Activated CD4-positive, alpha-beta memory T cell treated with anti-CD3 and anti-CD28 coated beads for 36 hours (primary cell): ENCODE measurements at regions of chr3 and their contacts with region 1.

Region 1: GRCh38 chr3:126911162-126912026 is 71.5 kb upstream of the PLXNA1 start:
- DNase-seq: peak; percentile 87
- H3K4me3 Mint-ChIP-seq: no peak overlapping the region
- H3K27ac Mint-ChIP-seq: peak overlapping the region; percentile 88
- H3K4me1 Mint-ChIP-seq: peaks cover 32% of the 10 kb centered on the region
- H3K27me3 Mint-ChIP-seq: no peaks in the 10 kb centered on the region

Region 2: GRCh38 chr3:126567696-126568438 is 343.5 kb before region 1 on chr3:
- CTCF ChIA-PET with region 1: no interaction called
- POLR2A ChIA-PET with region 1: no interaction called
- intact Hi-C with region 1: no loop called
- DNase-seq: no peak
- H3K4me3 Mint-ChIP-seq: no peak overlapping the region
- H3K27ac Mint-ChIP-seq: no peak overlapping the region
- H3K4me1 Mint-ChIP-seq: no peaks in the 10 kb centered on the region
- H3K27me3 Mint-ChIP-seq: peaks cover 12% of the 10 kb centered on the region

Region 3: GRCh38 chr3:126703512-126704462 is 207.6 kb before region 1 on chr3 and contains the start of gene CHCHD6:
- CTCF ChIA-PET with region 1: no interaction called
- POLR2A ChIA-PET with region 1: no interaction called
- intact Hi-C with region 1: loop called (anchors 10 kb)
- DNase-seq: peak; percentile 96
- H3K4me3 Mint-ChIP-seq: peak within 1 kb of the TSS; percentile 97
- H3K27ac Mint-ChIP-seq: peak within 1 kb of the TSS; percentile 72
- H3K4me1 Mint-ChIP-seq: peaks cover 21% of the 10 kb centered on the region
- H3K27me3 Mint-ChIP-seq: peaks cover 22% of the 10 kb centered on the region
- total RNA-seq, gene CHCHD6: 12.7 to 13.1 TPM

Region 4: DNA sequence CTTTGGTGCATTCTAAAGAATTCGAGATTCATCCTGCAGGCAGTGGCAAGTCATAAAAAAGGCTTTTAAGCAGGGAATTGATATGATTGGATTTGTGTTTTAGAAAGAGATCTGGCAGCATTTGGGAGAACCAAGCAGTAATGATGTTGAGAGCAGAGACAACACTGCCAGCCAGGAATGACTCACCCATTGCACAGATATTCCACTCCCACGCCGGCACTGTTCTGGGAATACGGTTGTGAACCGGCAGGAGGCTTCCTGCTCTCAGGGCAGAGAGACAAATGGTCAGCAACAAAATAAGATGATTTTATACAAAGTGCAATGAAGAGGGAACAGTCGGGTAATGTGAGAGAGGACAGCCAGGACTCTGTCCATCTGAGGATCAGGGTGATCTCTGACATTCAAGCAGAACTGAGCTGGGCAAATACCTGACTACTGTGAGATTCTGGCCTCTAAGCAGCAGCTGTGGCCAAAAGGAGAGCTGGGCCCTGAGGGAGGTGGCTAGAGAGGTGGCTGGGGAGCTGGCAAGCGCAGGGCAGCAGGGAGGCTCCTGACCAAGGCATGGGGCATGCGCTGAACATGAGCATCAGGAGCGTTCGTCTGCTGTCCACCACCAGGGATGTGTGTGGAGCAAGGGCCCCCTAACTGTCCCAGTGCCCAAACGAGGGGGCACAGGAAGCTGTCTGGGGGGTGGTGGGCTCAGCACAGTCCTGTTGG is 15.4 kb after region 1 on chr3:
- CTCF ChIA-PET with region 1: no interaction called
- POLR2A ChIA-PET with region 1: no interaction called
- intact Hi-C with region 1: no loop called
- DNase-seq: no peak
- H3K4me3 Mint-ChIP-seq: no peak overlapping the region
- H3K27ac Mint-ChIP-seq: no peak overlapping the region
- H3K4me1 Mint-ChIP-seq: no peaks in the 10 kb centered on the region
- H3K27me3 Mint-ChIP-seq: no peaks in the 10 kb centered on the region